Calu3 (cell line): ENCODE measurements at regions of chr4 and their contacts with region 1.

Region 1: GRCh38 chr4:48016141-48017103 is at the starts of genes CNGA1 and NIPAL1:
- DNase-seq: peak; percentile 93
- H3K4me3 Mint-ChIP-seq: peak within 1 kb of the TSS; percentile 89
- H3K27ac Mint-ChIP-seq: peak within 1 kb of the TSS; percentile 78
- H3K4me1 Mint-ChIP-seq: peaks cover 14% of the 10 kb centered on the region
- H3K27me3 Mint-ChIP-seq: no peaks in the 10 kb centered on the region
- CTCF ChIP-seq: no peak
- total RNA-seq, gene CNGA1: 2.2 and 2.4 TPM in 2 replicates
- total RNA-seq, gene NIPAL1: 17.0 and 21.0 TPM in 2 replicates

Region 2: DNA sequence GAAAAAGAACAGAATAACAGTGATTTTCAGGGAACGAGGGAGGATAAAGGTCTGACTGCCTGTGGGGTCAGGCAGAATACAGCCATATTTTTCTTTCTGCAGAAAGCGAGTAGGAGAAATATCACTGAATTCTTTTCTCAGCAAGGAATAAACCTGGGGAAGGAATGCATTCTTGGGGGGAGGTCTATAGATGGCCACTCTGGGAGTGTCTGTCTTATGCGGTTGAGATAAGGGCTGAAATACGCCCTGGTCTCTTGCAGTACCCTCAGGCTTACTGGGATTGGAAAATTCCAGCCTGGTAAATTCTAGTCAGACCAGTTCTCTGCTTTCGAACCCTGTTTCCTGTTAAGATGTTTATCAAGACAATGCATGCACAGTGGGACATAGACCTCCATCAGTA is 26.3 kb before region 1 on chr4:
- CTCF ChIA-PET with region 1: no interaction called
- intact Hi-C with region 1: no loop called
- DNase-seq: no peak
- H3K4me3 Mint-ChIP-seq: no peak overlapping the region
- H3K27ac Mint-ChIP-seq: no peak overlapping the region
- H3K4me1 Mint-ChIP-seq: no peaks in the 10 kb centered on the region
- H3K27me3 Mint-ChIP-seq: no peaks in the 10 kb centered on the region
- CTCF ChIP-seq: no peak

Region 3: DNA sequence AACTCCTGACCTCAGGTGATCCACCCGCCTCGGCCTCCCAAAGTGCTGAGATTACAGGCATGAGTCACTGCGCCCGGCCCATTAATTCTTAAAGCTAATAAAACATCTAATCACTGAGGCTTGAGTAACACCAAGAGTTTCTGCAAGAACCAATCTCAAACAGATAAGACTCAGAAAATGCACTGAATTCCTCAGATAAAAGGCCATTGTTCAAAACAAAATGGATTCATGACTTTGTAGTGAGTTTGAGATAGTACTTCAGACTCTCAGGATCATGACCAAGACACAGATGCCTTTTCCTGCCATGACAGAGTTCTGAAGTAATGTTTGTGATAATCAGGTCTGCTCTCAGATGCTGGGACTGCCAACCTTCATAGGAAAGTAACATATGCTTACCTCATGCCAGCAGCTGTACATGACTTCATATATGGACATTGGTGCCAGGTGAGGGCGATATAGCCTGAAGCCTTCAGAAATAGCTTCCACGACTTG is 54.7 kb after region 1 on chr4:
- CTCF ChIA-PET with region 1: no interaction called
- intact Hi-C with region 1: loop called (anchors 5 kb)
- DNase-seq: peak; percentile 49
- H3K4me3 Mint-ChIP-seq: no peak overlapping the region
- H3K27ac Mint-ChIP-seq: peak overlapping the region; percentile 69
- H3K4me1 Mint-ChIP-seq: peaks cover 34% of the 10 kb centered on the region
- H3K27me3 Mint-ChIP-seq: no peaks in the 10 kb centered on the region
- CTCF ChIP-seq: no peak